Activated CD4-positive, alpha-beta memory T cell treated with anti-CD3 and anti-CD28 coated beads for 36 hours (primary cell): ENCODE measurements at regions of chr18 and their contacts with region 1.

Region 1: DNA sequence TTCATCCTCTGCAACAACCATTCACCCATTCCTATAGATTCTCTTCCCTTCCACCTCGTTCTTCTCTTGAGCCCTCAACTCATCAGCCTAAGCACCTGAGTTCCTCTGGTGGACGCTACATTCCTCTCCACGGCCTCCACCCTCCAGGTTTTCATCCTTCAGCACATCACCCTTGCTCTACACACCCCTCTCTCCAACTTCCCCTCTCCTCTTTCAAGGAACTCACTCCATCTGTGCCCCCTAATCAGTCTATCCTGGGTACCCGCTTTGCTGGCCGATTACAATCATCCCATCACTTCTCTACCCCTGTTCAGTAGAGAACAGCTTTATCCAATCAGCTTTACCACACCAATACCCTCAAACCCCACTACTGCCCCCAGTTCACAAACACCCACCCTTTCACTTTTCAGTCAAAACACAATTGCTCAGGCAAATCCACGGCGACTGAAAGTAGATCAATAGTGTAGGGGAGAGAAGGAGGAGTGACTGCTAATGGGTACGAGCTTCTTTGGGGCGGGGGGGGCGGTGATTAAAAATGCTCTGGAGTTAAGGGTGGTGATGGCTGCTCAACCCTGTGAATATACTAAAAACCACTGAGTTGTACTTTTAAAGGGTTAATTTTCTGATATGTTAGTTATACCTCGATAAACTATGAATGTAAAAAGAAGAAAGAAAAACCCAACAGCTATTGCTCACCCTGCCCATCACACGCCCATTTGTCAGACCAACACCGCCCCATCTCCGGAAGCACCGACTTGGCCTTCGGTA is 857 bp downstream of the DYM start:
- DNase-seq: peak; percentile 52
- H3K4me3 Mint-ChIP-seq: peak overlapping the region; percentile 71
- H3K27ac Mint-ChIP-seq: peak overlapping the region; percentile 29
- H3K4me1 Mint-ChIP-seq: peaks cover 43% of the 10 kb centered on the region
- H3K27me3 Mint-ChIP-seq: no peaks in the 10 kb centered on the region

Region 2: DNA sequence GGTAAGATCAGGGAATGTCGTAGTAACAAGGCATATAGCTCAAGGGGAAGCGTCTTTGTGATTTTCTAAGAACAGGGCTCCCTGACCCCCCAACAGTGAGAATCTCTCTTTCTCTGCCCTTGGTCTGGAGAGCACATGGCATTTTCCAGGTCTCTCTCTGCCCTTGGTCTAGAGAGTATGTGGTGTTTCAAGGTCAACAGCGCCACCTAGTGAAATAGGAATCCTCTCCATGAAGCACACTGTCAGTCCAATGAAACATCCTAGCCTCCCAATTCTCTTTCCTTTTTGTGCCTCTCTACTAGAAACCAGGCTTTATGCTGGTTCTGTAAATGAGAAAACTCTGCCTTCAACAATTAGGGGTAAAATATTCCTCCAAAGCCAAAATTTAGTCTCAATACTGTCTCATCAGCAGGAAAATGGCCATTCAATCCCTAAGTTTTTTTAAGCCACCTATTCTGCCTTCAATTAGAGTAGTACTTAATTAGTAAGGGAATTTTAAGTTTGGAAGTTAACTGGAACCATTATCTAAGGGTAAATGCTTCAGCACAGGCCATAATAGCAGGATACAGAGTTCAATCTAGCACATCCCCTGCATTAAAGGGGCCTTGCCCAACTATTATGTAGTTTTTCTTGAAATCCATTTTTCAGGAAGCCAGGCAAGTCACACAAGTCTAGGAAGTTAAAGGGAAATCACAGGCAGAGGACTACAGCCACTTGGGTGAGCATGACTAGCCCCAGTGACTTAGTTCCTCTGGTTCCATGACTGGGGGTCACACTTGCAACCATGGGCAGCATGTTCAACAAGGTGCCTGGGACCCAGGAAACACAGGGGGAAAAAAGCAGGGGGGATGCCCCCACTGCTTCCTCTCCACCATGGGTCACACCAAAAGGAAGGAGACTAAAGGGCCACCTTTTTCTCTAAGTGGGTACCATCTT is 11.5 kb before region 1 on chr18:
- CTCF ChIA-PET with region 1: interaction called, 11 read pairs
- POLR2A ChIA-PET with region 1: no interaction called
- intact Hi-C with region 1: no loop called
- DNase-seq: peak; percentile 42
- H3K4me3 Mint-ChIP-seq: no peak overlapping the region
- H3K27ac Mint-ChIP-seq: no peak overlapping the region
- H3K4me1 Mint-ChIP-seq: peaks cover 14% of the 10 kb centered on the region
- H3K27me3 Mint-ChIP-seq: no peaks in the 10 kb centered on the region

Region 3: DNA sequence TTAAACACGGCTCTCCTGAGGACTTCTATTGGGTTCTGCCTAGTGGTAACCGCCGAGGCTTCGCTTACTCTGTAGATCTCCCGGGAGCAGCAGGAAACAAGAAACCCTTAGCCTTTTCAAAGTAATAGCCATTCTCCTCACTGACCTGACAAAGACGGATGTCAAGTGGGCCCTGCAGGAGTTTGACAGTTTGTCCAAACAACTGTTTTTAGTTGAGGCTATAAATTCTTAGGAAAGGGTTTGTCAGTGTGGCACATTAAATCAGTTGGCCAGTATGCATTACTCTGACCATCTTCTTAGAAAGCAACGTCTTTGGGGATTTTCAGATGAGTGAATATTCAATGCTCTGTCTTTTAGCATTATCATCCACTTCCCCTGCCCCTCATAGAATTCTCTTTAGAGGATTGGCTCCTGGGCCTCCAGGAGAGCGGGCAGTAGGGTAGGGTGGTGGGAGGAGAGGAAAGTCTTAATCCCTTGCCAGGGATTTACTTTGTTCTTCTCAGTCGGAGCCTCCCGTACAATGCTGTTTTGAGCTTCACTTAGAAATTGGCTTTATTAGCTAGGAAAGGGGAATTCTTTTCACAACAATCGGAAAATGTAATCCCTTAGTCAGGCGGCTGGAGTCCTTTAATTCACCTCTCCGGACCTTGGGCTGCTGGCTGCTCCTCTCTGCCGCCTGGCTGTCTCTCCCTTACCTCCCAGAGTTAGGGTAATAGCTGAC is 40.8 kb after region 1 on chr18:
- CTCF ChIA-PET with region 1: no interaction called
- POLR2A ChIA-PET with region 1: no interaction called
- intact Hi-C with region 1: no loop called
- DNase-seq: no peak
- H3K4me3 Mint-ChIP-seq: no peak overlapping the region
- H3K27ac Mint-ChIP-seq: no peak overlapping the region
- H3K4me1 Mint-ChIP-seq: no peaks in the 10 kb centered on the region
- H3K27me3 Mint-ChIP-seq: peaks cover 11% of the 10 kb centered on the region

Region 4: GRCh38 chr18:49510393-49511115 is 51.0 kb after region 1 on chr18:
- CTCF ChIA-PET with region 1: no interaction called
- POLR2A ChIA-PET with region 1: no interaction called
- intact Hi-C with region 1: no loop called
- DNase-seq: peak; percentile 61
- H3K4me3 Mint-ChIP-seq: no peak overlapping the region
- H3K27ac Mint-ChIP-seq: no peak overlapping the region
- H3K4me1 Mint-ChIP-seq: no peaks in the 10 kb centered on the region
- H3K27me3 Mint-ChIP-seq: peaks cover 13% of the 10 kb centered on the region